ENCODE measurements at regions of chr14 and their contacts with region 1.

Region 1: GRCh38 chr14:61578745-61579144 is 116.6 kb upstream of the HIF1A start:
- DNase-seq: peak in 2 of 14 experiments; percentile 15 to 29
- ATAC-seq: no peak
- H3K4me3 ChIP-seq: no peak overlapping the region
- H3K4me3 Mint-ChIP-seq: peak overlapping the region; percentile 4
- H3K27ac ChIP-seq: no peak overlapping the region
- H3K27ac Mint-ChIP-seq: peak overlapping the region; percentile 56
- H3K4me1 ChIP-seq: peaks cover 8% of the 10 kb centered on the region
- H3K4me1 Mint-ChIP-seq: peaks cover 53% of the 10 kb centered on the region
- H3K27me3 ChIP-seq: no peaks in the 10 kb centered on the region
- H3K27me3 Mint-ChIP-seq: no peaks in the 10 kb centered on the region
- CTCF ChIP-seq: no peak

Region 2: GRCh38 chr14:61616524-61617185 is 37.9 kb after region 1 on chr14:
- CTCF ChIA-PET with region 1: no interaction called
- POLR2A ChIA-PET with region 1: no interaction called
- intact Hi-C with region 1: no loop called
- DNase-seq: no peak
- ATAC-seq: no peak
- H3K4me3 ChIP-seq: no peak overlapping the region
- H3K4me3 Mint-ChIP-seq: no peak overlapping the region
- H3K27ac ChIP-seq: no peak overlapping the region
- H3K27ac Mint-ChIP-seq: no peak overlapping the region
- H3K4me1 ChIP-seq: no peaks in the 10 kb centered on the region
- H3K4me1 Mint-ChIP-seq: peaks cover 19% of the 10 kb centered on the region
- H3K27me3 ChIP-seq: no peaks in the 10 kb centered on the region
- H3K27me3 Mint-ChIP-seq: no peaks in the 10 kb centered on the region
- CTCF ChIP-seq: no peak

Region 3: GRCh38 chr14:61644834-61645233 is 66.1 kb after region 1 on chr14:
- CTCF ChIA-PET with region 1: no interaction called
- POLR2A ChIA-PET with region 1: no interaction called
- intact Hi-C with region 1: loop called in 1 of 2 experiments (anchors 5 kb)
- DNase-seq: no peak
- ATAC-seq: no peak
- H3K4me3 ChIP-seq: no peak overlapping the region
- H3K4me3 Mint-ChIP-seq: no peak overlapping the region
- H3K27ac ChIP-seq: no peak overlapping the region
- H3K27ac Mint-ChIP-seq: no peak overlapping the region
- H3K4me1 ChIP-seq: peaks cover 6% of the 10 kb centered on the region
- H3K4me1 Mint-ChIP-seq: peaks cover 34% of the 10 kb centered on the region
- H3K27me3 ChIP-seq: no peaks in the 10 kb centered on the region
- H3K27me3 Mint-ChIP-seq: no peaks in the 10 kb centered on the region
- CTCF ChIP-seq: no peak

Region 4: DNA sequence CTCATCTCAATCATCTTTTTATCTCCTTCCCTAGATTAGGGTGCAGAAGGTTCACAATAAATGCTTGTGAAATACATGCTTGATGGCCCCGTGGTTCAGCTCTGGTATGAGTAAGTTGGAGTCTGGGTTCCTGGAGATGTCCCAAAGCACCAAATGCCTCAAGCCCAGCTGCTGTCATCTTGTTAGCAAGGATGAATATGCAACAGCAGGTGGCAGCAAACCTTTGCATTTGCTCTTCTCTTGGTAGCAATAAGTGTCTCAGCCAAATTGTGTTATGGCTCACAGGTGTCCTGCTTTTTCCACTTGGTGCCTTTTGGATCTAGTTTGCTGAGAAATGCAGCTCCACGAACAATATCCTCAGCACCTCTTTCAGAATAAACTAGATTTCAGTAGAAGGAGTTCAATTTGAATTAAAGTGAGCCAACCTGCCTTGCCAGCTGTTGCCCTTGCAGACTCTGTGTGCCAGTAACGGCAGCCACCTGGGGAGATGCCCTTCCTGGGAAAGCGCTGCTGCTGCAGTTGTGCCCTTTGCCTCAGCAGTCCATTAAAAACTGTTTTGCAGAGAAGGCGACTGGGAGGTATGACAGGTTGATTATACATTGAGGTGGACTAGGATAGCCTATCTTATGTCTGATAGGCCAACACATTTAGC is 600.7 kb after region 1 on chr14:
- CTCF ChIA-PET with region 1: no interaction called
- POLR2A ChIA-PET with region 1: no interaction called
- intact Hi-C with region 1: no loop called
- DNase-seq: peak in 3 of 14 experiments; percentile 8 to 23 (median 11)
- ATAC-seq: no peak
- H3K4me3 ChIP-seq: no peak overlapping the region
- H3K4me3 Mint-ChIP-seq: no peak overlapping the region
- H3K27ac ChIP-seq: no peak overlapping the region
- H3K27ac Mint-ChIP-seq: no peak overlapping the region
- H3K4me1 ChIP-seq: no peaks in the 10 kb centered on the region
- H3K4me1 Mint-ChIP-seq: no peaks in the 10 kb centered on the region
- H3K27me3 ChIP-seq: peaks cover 2 to 7% of the 10 kb centered on the region in 2 experiments
- H3K27me3 Mint-ChIP-seq: peaks cover 44% of the 10 kb centered on the region
- CTCF ChIP-seq: no peak

Measured in CD4-positive, alpha-beta T cell (primary cell).